Heart right ventricle (tissue), 16 donors: ENCODE measurements at regions of chr16 and their contacts with region 1.

Region 1: GRCh38 chr16:78503602-78504001 is 404.1 kb downstream of the WWOX start:
- DNase-seq: peak in 1 of 2 donors; percentile 79
- ATAC-seq: no peak
- H3K4me3 ChIP-seq: no peak overlapping the region
- H3K27ac ChIP-seq: no peak overlapping the region
- H3K4me1 ChIP-seq: peaks cover 0 to 54% (median 17%) of the 10 kb centered on the region in 9 donors
- H3K27me3 ChIP-seq: no peaks in the 10 kb centered on the region
- CTCF ChIP-seq: peak; percentile 79 to 93 (median 89)

Region 2: GRCh38 chr16:78607486-78607885 is 103.9 kb after region 1 on chr16:
- intact Hi-C with region 1: loop called in 1 of 10 experiments (anchors 10 kb)
- DNase-seq: no peak
- ATAC-seq: peak in 7 of 8 donors; percentile 43 to 80 (median 49)
- H3K4me3 ChIP-seq: no peak overlapping the region
- H3K27ac ChIP-seq: peak overlapping the region in 2 of 10 donors; percentile 48 to 74
- H3K4me1 ChIP-seq: peaks cover 0 to 31% (median 15%) of the 10 kb centered on the region in 9 donors
- H3K27me3 ChIP-seq: no peaks in the 10 kb centered on the region
- CTCF ChIP-seq: no peak

Region 3: DNA sequence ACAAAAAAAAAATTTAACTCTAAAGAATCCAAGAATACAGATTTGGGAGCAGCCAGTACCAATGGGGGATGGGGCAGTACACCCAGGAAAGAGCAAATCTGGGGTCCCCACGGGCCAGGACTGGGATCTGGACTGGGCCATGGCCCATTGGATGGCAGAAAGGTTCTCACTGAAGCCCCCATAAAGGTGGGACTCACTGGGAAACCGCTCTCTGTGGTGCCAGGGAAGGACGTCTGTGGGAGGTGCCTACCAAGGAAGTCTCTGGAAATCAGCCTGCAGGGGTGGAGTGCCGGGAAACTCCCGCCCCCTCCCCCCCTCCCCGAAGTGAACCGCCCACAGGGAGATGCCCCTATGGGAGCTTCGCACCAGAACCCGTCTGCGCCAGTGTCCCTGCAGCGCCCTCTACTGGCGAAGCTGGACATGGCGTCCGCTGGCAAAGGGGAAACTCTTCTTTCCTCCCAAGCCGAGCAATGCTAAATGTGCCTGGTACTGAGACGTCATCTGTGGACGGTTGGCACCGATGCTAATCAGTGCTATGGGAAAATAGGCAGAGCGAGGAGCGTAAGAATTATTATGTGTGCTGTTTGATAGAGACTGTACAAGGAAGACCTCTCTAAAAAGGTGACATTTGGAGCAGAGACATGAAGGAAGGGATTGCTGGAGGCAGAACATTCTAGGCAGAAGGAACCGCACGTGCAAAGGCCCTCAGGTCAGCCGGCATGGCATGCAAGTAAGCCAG is 266.9 kb after region 1 on chr16:
- intact Hi-C with region 1: loop called in 9 of 10 experiments (anchors 1 to 5 kb)
- DNase-seq: peak; percentile 70 to 79
- ATAC-seq: peak; percentile 61 to 90 (median 84)
- H3K4me3 ChIP-seq: no peak overlapping the region
- H3K27ac ChIP-seq: peak overlapping the region in 3 of 10 donors; percentile 33 to 52 (median 50)
- H3K4me1 ChIP-seq: peaks cover 0 to 16% (median 7%) of the 10 kb centered on the region in 9 donors
- H3K27me3 ChIP-seq: no peaks in the 10 kb centered on the region
- CTCF ChIP-seq: peak; percentile 77 to 92 (median 87)

Region 4: DNA sequence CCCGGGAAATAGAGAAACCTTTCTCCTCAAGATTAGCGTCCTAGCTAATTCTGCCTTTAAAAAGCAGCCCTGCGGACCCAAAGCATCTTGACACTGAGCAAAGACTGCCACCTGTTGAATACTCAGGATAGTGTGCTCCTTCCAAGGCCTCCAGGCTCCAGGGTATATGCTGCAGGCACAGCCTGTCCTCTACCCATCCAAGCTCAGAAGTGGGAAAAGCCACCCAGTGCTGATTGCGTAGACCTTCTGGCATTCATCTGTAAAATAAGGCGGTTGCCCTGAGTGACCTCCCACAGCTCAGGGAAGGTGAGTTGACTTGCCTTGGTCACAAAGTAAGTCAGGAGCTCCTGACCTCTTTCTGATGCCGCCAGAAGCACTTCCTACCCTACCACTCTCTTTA is 1581.1 kb after region 1 on chr16:
- intact Hi-C with region 1: loop called in 2 of 10 experiments (anchors 5 to 10 kb)
- DNase-seq: peak; percentile 10 to 46
- ATAC-seq: peak; percentile 59 to 97 (median 90)
- H3K4me3 ChIP-seq: no peak overlapping the region
- H3K27ac ChIP-seq: no peak overlapping the region
- H3K4me1 ChIP-seq: peaks cover 0 to 4% (median 0%) of the 10 kb centered on the region in 9 donors
- H3K27me3 ChIP-seq: no peaks in the 10 kb centered on the region
- CTCF ChIP-seq: peak; percentile 37 to 74 (median 66)